IMR-90 (cell line): ENCODE measurements at regions of chr10 and their contacts with region 1.

Region 1: DNA sequence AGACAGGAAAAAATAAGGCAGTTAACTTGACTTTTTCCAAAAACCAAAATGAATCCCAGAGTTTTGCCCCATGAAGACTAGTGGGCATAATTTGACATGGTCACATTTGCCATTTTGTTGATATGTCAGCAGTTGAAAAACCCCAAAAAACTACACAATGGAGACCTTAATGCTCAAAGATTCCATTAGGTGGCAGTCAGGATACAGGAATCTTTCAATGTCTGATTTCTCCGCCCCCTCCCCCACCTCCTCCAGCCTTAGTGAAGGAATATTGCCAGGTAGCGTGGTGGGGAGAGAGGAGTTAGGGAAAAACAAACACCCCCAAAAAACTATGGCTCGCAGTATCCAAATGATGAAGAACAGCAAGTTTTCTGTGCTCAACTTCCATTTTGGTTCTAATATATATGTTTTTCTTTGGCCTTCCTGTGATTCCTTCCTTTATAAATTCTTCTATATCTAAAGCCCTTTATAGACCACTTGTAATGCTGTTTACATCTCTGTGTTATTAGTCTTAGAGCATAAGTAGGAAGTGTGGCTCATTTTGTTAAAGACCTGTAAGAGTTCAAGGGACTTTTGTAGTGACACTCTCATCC is 6.7 kb upstream of the SMNDC1 start:
- DNase-seq: peak; percentile 70
- ATAC-seq: peak; percentile 97
- H3K4me3 ChIP-seq: no peak overlapping the region
- H3K27ac ChIP-seq: no peak overlapping the region
- H3K4me1 ChIP-seq: no peaks in the 10 kb centered on the region
- H3K27me3 ChIP-seq: no peaks in the 10 kb centered on the region
- CTCF ChIP-seq: peak; percentile 80
- POLR2A ChIP-seq: no peak
- RAD21 ChIP-seq: peak; percentile 95

Region 2: DNA sequence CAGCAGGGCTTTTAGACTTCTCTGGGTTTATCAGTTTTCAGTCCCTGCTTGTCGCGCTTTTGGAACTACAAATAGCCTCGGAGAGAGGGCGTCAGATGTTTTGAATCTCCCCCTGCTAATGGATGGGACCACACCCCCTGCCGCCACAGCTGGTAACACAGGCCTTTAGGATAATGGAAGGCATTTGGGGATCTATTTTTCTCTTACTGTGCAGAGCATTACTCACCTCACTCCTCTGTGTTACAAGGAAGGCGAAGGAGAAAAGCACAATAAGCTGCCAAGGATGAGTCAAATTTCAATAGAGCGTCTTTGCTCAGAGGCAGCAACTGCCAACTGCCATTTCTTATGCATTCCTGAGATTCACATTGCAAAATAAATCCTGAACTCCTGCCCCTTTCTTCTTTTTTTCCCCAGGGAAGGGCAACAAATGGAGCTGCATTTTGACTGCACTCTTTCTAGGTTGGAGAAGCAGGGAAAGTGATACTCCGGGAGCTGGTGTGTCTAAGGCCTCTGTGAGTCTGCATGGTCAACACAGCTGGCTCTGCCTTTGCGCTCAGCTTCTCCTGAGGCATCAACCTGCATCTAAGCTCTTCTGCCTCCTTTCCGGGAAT is 24.8 kb after region 1 on chr10:
- CTCF ChIA-PET with region 1: no interaction called
- POLR2A ChIA-PET with region 1: no interaction called
- dilution Hi-C with region 1: no loop called
- in situ Hi-C with region 1: no loop called
- intact Hi-C with region 1: no loop called
- DNase-seq: peak; percentile 98
- ATAC-seq: peak; percentile 93
- H3K4me3 ChIP-seq: no peak overlapping the region
- H3K27ac ChIP-seq: peak overlapping the region; percentile 83
- H3K4me1 ChIP-seq: peaks cover 9% of the 10 kb centered on the region
- H3K27me3 ChIP-seq: no peaks in the 10 kb centered on the region
- CTCF ChIP-seq: peak; percentile 17; the same call in 1 of the 2 replicates
- POLR2A ChIP-seq: no peak
- RAD21 ChIP-seq: no peak

Region 3: GRCh38 chr10:110398419-110399162 is 87.1 kb after region 1 on chr10:
- CTCF ChIA-PET with region 1: no interaction called
- POLR2A ChIA-PET with region 1: no interaction called
- dilution Hi-C with region 1: no loop called
- in situ Hi-C with region 1: no loop called
- intact Hi-C with region 1: loop called (anchors 2 kb)
- DNase-seq: peak; percentile 98
- ATAC-seq: peak; percentile 92
- H3K4me3 ChIP-seq: no peak overlapping the region
- H3K27ac ChIP-seq: peak overlapping the region; percentile 74
- H3K4me1 ChIP-seq: peaks cover 22% of the 10 kb centered on the region
- H3K27me3 ChIP-seq: no peaks in the 10 kb centered on the region
- CTCF ChIP-seq: no peak
- POLR2A ChIP-seq: 0 out of 2 replicates have a peak, but pooled peaks have one; percentile 56
- RAD21 ChIP-seq: peak; percentile 17

Region 4: GRCh38 chr10:110497438-110498086 is 186.1 kb after region 1 on chr10 and contains the start of gene DUSP5:
- CTCF ChIA-PET with region 1: no interaction called
- POLR2A ChIA-PET with region 1: no interaction called
- dilution Hi-C with region 1: no loop called
- in situ Hi-C with region 1: no loop called
- intact Hi-C with region 1: loop called (anchors 1 kb)
- DNase-seq: peak; percentile 92
- ATAC-seq: peak; percentile 78
- H3K4me3 ChIP-seq: peak within 1 kb of the TSS; percentile 90
- H3K27ac ChIP-seq: peak within 1 kb of the TSS; percentile 86
- H3K4me1 ChIP-seq: peaks cover 20% of the 10 kb centered on the region
- H3K27me3 ChIP-seq: no peaks in the 10 kb centered on the region
- CTCF ChIP-seq: no peak; the same call in 1 of the 2 replicates
- POLR2A ChIP-seq: peak; percentile 99
- RAD21 ChIP-seq: peak; percentile 28
- total RNA-seq, gene DUSP5: 42.1 and 55.3 TPM in 2 replicates

Region 5: DNA sequence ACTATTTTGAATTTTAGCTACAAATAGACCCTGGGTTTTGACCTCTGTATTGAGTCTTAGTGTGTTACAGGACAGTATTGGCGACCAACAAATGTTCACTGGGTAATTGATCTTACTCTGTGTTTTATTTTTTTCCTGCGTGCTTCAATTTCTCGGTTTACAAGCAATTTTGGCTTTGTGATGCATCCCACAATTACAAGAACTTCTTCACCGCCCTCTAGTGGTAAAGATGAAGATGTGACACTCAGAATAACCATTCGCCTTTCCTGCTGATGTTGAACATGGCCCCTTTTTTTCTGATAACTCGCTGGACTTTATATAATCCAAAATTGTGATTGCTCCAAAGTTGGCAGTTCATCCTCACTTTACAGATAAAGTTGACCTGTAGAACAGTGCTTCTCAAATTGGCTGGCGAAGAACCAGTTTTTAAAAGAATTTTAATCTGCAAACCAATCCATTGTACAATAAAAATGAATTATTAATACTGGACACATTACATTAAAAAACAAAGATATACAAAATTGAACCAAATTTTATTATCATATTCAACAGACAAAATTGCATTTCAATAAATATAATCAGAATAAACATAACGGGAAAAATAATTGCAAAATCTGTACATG is 235.8 kb after region 1 on chr10:
- CTCF ChIA-PET with region 1: interaction called, 10 read pairs
- POLR2A ChIA-PET with region 1: no interaction called
- dilution Hi-C with region 1: no loop called
- in situ Hi-C with region 1: loop called (anchors 5 kb)
- intact Hi-C with region 1: loop called (anchors 1 kb)
- DNase-seq: peak; percentile 77
- ATAC-seq: peak; percentile 73
- H3K4me3 ChIP-seq: no peak overlapping the region
- H3K27ac ChIP-seq: no peak overlapping the region
- H3K4me1 ChIP-seq: peaks cover 2% of the 10 kb centered on the region; the same call in 1 of the 2 replicates
- H3K27me3 ChIP-seq: peaks cover 2% of the 10 kb centered on the region; the same call in 1 of the 2 replicates
- CTCF ChIP-seq: peak; percentile 82
- POLR2A ChIP-seq: no peak
- RAD21 ChIP-seq: peak; percentile 86

Region 6: DNA sequence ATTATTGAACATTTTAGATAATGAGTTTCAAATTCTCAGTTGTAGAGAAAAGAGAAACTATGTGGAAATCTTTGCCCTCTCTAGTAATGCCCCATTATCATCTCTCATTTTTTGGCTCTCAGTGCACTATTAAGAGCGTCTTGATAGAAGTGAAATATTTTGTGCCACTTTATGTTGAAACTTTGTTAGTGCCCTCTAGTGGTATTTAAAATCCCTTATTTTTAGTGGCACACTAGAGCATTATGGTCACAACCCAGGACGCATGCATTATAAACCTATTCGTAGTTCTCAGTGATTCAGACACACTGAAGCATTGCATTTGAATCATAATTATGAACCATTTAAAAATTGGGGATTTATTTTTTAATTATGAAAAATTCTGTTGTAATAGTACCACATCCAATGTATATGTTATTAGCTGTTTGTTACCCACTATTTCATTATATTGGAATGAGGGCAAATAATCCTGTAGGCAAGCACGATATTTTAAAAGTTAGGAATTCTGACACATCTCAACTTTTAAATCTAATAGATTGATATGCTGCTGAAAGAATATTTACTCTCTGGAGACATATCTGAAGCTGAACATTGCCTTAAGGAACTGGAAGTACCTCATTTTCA is 582.2 kb after region 1 on chr10:
- CTCF ChIA-PET with region 1: no interaction called
- POLR2A ChIA-PET with region 1: no interaction called
- dilution Hi-C with region 1: no loop called
- in situ Hi-C with region 1: loop called (anchors 10 kb)
- intact Hi-C with region 1: loop called (anchors 10 kb)
- DNase-seq: peak; percentile 46
- ATAC-seq: peak; percentile 72
- H3K4me3 ChIP-seq: no peak overlapping the region
- H3K27ac ChIP-seq: no peak overlapping the region
- H3K4me1 ChIP-seq: peaks cover 6% of the 10 kb centered on the region
- H3K27me3 ChIP-seq: no peaks in the 10 kb centered on the region
- CTCF ChIP-seq: peak; percentile 52
- POLR2A ChIP-seq: no peak
- RAD21 ChIP-seq: peak; percentile 48